CD8-positive, alpha-beta T cell (primary cell): ENCODE measurements at regions of chr7 and their contacts with region 1.

Region 1: DNA sequence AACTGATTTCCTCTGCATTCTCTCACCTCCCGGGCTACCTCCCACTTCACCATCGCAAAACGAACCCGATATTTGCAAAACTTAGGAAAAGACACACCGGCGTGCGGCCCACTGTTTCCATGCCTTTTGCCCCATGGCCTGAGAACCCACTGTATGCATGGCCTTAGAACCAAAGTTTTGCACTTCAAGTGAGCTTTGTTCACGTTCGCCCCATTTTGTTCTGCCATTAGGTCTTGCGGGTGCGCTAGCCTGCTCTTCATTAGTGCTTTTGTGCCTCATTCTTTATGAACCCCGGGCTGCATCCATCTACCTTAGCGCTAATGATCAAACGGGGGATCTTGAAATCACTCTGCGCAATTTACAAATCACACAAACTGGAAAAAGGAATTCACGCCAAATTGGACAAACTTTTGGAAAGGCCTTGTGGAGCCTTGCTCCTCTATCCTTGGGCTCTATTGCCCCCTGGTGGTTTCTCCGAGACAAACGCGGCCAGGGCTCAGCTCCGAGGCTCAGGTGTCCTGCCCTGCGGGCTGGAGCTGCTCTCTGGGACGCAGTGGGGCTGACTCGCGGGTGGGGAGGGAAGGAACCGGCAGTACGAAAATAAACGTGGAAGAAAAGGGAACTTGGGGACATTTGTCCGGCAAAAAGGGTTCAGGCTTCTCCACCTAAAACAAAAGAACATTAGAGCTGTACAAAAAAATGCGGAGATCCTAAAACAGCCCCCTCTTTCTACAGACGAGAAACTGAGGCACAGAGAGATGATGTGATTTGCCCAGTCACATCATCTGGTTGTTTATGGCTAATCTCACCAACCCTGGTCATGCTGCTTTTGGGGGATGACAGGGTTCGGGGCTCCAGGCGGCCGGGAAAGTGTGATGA is 300.4 kb upstream of the NFE2L3 start:
- DNase-seq: peak in 6 of 9 experiments; percentile 24 to 69 (median 56)
- ATAC-seq: peak; percentile 70
- H3K4me3 ChIP-seq: no peak overlapping the region
- H3K4me3 Mint-ChIP-seq: peak overlapping the region; percentile 65
- H3K27ac ChIP-seq: no peak overlapping the region
- H3K27ac Mint-ChIP-seq: no peak overlapping the region
- H3K4me1 ChIP-seq: peaks cover 17% of the 10 kb centered on the region
- H3K4me1 Mint-ChIP-seq: peaks cover 11% of the 10 kb centered on the region
- H3K27me3 ChIP-seq: peaks cover 43% of the 10 kb centered on the region in 2 experiments
- H3K27me3 Mint-ChIP-seq: peaks cover 68% of the 10 kb centered on the region
- CTCF ChIP-seq: peak; percentile 48

Region 2: DNA sequence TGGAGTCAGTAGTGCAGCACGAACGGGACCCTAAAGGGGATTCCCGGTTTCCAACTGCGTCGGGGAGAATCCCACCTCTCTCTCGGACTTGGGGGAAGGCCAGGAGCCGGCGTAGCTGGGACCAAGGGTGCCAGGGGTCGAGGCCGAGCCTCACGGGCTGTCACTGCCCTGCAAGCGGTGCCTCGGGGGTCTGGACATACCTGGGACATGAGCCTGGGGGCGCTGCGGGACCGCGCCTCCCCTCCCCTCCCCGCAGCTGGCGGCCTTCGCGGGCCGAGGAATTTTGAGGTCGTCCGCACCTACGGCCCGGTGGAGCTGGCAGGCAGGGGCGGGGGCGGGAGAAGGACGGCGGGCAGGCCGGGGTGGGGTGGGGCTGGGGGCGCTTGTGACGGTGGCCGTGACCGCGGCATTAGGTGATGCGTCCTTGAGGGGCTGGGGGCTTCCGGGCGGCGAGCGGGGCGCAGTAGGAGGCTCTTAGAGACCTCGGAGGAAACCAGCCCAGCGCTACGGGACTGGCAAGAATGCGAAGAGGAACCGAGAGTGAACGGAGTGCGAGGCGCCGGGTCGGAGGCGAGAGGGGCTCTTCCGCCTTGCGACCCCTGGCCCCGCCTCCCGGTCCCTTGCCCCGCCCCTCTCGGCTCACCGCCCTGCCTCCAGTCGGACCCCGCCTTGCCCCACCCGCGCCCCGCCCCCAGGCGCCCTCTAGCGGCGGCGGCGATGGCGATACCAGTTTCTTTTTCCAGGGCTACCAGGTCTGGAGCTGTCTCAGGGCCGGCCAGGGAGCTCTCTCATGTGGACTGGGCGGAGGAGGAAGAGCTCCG is 671.6 kb before region 1 on chr7:
- CTCF ChIA-PET with region 1: no interaction called
- POLR2A ChIA-PET with region 1: no interaction called
- intact Hi-C with region 1: loop called in 1 of 2 experiments (anchors 2 kb)
- DNase-seq: peak; percentile 92 to 99 (median 95)
- ATAC-seq: peak; percentile 98
- H3K4me3 ChIP-seq: peak overlapping the region; percentile 64 to 70
- H3K4me3 Mint-ChIP-seq: peak overlapping the region; percentile 91
- H3K27ac ChIP-seq: peak overlapping the region; percentile 57 to 83
- H3K27ac Mint-ChIP-seq: peak overlapping the region; percentile 92
- H3K4me1 ChIP-seq: peaks cover 7% of the 10 kb centered on the region
- H3K4me1 Mint-ChIP-seq: peaks cover 22% of the 10 kb centered on the region
- H3K27me3 ChIP-seq: no peaks in the 10 kb centered on the region
- H3K27me3 Mint-ChIP-seq: peaks cover under 1% of the 10 kb centered on the region
- CTCF ChIP-seq: peak; percentile 91

Region 3: DNA sequence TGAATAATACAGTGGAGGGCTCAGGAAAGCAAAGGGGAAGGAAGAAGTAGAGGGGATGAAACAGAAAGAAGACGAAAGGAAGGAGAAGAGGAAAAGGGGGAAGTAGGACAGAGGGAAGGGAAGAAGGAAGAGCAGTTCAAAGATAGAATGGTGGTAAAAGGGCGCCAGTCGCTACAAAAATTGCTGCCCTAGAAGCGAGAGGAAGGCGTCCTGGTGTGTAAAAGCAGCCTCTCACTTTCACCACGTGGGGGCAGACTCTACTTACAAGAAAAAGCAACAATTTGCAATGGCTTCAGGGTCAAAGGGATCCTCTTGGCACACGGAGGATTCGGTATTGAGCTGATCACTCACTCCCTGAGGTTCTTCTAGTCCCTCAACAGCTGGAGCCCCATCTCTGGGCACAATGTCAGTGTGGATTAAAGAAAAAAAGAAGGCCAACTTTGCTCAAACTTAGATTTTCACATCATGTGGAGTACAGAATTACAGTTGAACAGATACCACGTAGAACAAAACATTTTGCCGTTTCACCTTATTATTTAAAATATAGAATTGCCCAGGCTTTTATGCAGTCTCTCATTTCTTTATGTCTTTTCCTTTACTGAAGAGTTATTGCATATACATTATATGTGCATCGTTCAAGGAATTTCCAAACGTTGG is 591.9 kb before region 1 on chr7:
- CTCF ChIA-PET with region 1: interaction called, 5 read pairs
- POLR2A ChIA-PET with region 1: no interaction called
- intact Hi-C with region 1: loop called in 1 of 2 experiments (anchors 2 kb)
- DNase-seq: peak; percentile 24 to 83 (median 65)
- ATAC-seq: peak; percentile 83
- H3K4me3 ChIP-seq: no peak overlapping the region
- H3K4me3 Mint-ChIP-seq: peak overlapping the region; percentile 61
- H3K27ac ChIP-seq: no peak overlapping the region
- H3K27ac Mint-ChIP-seq: no peak overlapping the region
- H3K4me1 ChIP-seq: peaks cover 20% of the 10 kb centered on the region
- H3K4me1 Mint-ChIP-seq: peaks cover 25% of the 10 kb centered on the region
- H3K27me3 ChIP-seq: no peaks in the 10 kb centered on the region
- H3K27me3 Mint-ChIP-seq: peaks cover 3% of the 10 kb centered on the region
- CTCF ChIP-seq: peak; percentile 81

Region 4: DNA sequence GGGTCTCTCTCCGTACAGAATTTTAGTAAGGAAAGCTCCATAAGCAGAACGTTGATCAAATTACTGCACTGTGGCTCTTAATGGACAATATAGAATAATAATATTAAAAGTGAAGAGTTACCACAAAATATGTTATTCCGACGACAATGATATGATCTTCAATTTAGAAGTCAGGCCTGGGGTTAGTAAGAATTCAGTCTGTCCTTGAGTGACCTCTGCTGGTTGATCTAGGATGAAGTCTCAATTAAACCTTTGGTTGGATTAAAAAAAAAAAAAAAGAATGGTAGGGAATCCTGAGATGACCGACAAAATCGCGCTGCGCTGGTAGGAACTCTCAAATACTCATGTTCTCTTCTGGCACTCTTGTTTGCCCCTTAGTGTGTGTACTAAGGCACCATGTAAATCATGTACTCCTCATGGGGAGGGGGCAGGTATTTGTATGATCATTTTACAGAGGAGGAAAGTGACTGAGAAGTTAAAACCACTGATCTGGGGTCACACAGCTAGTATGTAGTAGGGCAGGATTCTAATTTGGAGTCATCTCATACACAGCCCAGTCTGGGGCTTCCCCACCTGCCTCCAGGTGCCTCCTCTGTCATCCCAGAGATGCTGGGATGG is 462.0 kb before region 1 on chr7:
- CTCF ChIA-PET with region 1: interaction called, 4 read pairs
- POLR2A ChIA-PET with region 1: no interaction called
- intact Hi-C with region 1: loop called (anchors 2 to 5 kb)
- DNase-seq: peak in 2 of 9 experiments; percentile 34 to 57
- ATAC-seq: no peak
- H3K4me3 ChIP-seq: no peak overlapping the region
- H3K4me3 Mint-ChIP-seq: no peak overlapping the region
- H3K27ac ChIP-seq: no peak overlapping the region
- H3K27ac Mint-ChIP-seq: no peak overlapping the region
- H3K4me1 ChIP-seq: no peaks in the 10 kb centered on the region
- H3K4me1 Mint-ChIP-seq: no peaks in the 10 kb centered on the region
- H3K27me3 ChIP-seq: no peaks in the 10 kb centered on the region
- H3K27me3 Mint-ChIP-seq: peaks cover 4% of the 10 kb centered on the region
- CTCF ChIP-seq: no peak

Region 5: GRCh38 chr7:25565949-25566348 is 285.6 kb before region 1 on chr7:
- CTCF ChIA-PET with region 1: interaction called, 3 read pairs
- POLR2A ChIA-PET with region 1: interaction called, 3 read pairs
- intact Hi-C with region 1: loop called (anchors 2 to 5 kb)
- DNase-seq: peak; percentile 44 to 79 (median 62)
- ATAC-seq: peak; percentile 68
- H3K4me3 ChIP-seq: no peak overlapping the region
- H3K4me3 Mint-ChIP-seq: no peak overlapping the region
- H3K27ac ChIP-seq: no peak overlapping the region
- H3K27ac Mint-ChIP-seq: no peak overlapping the region
- H3K4me1 ChIP-seq: no peaks in the 10 kb centered on the region
- H3K4me1 Mint-ChIP-seq: peaks cover 4% of the 10 kb centered on the region
- H3K27me3 ChIP-seq: no peaks in the 10 kb centered on the region
- H3K27me3 Mint-ChIP-seq: no peaks in the 10 kb centered on the region
- CTCF ChIP-seq: peak; percentile 100

Region 6: DNA sequence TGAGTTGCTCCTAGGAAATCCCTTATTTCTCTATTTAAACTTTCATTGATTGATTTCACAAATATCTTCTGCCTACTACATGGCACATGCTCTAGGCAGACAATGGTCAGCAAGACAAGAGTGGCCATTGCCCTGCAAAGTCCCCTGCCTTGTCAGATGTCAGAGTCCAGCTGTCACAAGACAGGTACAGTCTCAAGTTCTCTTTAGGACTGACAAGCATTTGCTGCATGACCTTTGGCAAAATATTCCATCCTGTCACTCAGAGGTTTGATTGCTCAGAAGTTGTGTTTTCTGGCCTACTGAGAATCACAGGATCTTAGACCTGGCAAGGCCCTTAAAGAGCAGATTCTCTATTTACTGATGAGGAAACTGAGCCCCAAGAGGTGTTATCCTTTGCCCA is 21.9 kb before region 1 on chr7:
- CTCF ChIA-PET with region 1: no interaction called
- POLR2A ChIA-PET with region 1: no interaction called
- intact Hi-C with region 1: no loop called
- DNase-seq: no peak
- ATAC-seq: no peak
- H3K4me3 ChIP-seq: no peak overlapping the region
- H3K4me3 Mint-ChIP-seq: no peak overlapping the region
- H3K27ac ChIP-seq: no peak overlapping the region
- H3K27ac Mint-ChIP-seq: no peak overlapping the region
- H3K4me1 ChIP-seq: no peaks in the 10 kb centered on the region
- H3K4me1 Mint-ChIP-seq: no peaks in the 10 kb centered on the region
- H3K27me3 ChIP-seq: no peaks in the 10 kb centered on the region
- H3K27me3 Mint-ChIP-seq: peaks cover 14% of the 10 kb centered on the region
- CTCF ChIP-seq: no peak

Region 7: GRCh38 chr7:25862260-25863037 is 10.9 kb after region 1 on chr7:
- CTCF ChIA-PET with region 1: interaction called, 3 read pairs
- POLR2A ChIA-PET with region 1: interaction called, 4 read pairs
- intact Hi-C with region 1: loop called in 1 of 2 experiments (anchors 2 kb)
- DNase-seq: peak in 7 of 9 experiments; percentile 36 to 82 (median 53)
- ATAC-seq: peak; percentile 83
- H3K4me3 ChIP-seq: peak overlapping the region in 1 of 2 experiments; percentile 13
- H3K4me3 Mint-ChIP-seq: peak overlapping the region; percentile 11
- H3K27ac ChIP-seq: no peak overlapping the region
- H3K27ac Mint-ChIP-seq: no peak overlapping the region
- H3K4me1 ChIP-seq: peaks cover 14% of the 10 kb centered on the region
- H3K4me1 Mint-ChIP-seq: peaks cover 17% of the 10 kb centered on the region
- H3K27me3 ChIP-seq: peaks cover 64 to 84% of the 10 kb centered on the region in 2 experiments
- H3K27me3 Mint-ChIP-seq: peaks cover 69% of the 10 kb centered on the region
- CTCF ChIP-seq: no peak